ENCODE measurements at regions of chr2 and their contacts with region 1.

Region 1: DNA sequence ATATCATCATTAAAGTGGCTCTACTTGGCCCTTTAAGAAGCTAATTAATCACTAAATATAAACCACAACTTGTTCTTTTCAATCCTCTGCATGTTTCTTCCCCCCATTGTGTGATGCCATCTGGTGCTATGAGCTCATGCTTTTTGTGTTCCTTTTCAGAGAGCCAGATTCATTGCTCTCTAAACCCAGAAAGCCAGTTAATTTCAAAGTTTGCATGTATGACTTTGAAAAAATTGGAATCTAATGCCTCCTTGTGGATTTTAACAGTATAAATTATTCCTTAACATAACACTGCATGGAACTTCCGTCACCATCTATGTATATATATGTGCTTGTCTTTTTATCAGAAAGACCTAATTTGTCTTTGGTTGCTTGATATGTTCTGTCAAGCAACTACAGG is 31.1 kb downstream of the TMEM178A start:
- DNase-seq: no peak

Region 2: GRCh38 chr2:39379643-39380524 is 317.0 kb before region 1 on chr2:
- intact Hi-C with region 1: loop called (anchors 10 kb)
- DNase-seq: no peak

Region 3: GRCh38 chr2:39513641-39514094 is 183.2 kb before region 1 on chr2:
- intact Hi-C with region 1: loop called (anchors 2 kb)
- DNase-seq: peak in 4 of 10 donors; percentile 29 to 57 (median 44)

Region 4: GRCh38 chr2:39541011-39541930 is 155.6 kb before region 1 on chr2:
- intact Hi-C with region 1: no loop called
- DNase-seq: no peak

Region 5: DNA sequence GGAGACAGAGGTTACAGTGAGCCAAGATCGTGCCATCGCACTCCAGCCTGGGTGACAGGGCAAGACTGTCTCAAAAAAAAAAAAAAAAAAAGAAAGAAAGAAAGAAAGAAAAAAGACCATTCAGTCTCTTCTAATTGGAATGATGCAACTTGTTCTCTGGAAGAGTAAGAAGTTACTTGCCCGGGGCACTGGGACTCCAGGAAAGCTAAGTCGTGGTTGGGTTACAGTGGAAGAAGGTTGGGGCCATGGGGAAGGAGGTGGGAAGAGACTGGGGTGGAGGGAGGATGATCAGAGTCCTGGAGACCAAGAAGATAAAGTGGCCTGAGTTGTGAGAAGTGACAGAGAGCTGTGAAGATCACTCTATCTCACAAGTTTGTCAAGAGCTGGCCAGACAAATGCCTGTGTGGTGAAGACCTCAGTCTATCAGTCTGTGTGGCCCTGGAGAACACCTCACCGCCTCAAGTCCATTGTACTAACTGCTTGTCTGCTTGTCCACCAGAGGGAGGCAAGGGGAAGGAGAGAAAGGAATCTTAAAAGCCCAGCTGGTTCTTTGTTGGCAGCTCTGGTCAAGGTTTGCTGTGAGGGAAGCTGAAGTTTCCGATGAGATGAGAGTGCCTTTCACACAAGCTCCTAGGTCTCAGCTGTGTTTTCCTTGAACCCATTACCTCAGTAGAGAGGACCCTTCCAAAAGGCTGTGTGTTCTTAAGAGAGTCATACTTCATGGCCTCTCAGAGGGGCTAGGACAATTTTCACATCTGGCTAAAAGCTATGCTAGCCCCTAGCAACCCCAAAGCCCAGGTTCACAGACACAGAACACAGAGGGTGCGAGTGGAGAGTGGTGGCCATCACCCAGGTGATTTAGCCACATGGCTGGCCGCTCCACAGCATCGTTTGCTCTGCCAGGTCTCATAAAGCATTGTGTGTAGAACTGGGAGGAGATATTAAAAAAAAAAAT is 103.1 kb before region 1 on chr2:
- intact Hi-C with region 1: loop called (anchors 2 kb)
- DNase-seq: peak in 2 of 10 donors; percentile 25 to 44

Measured in posterior cingulate gyrus (tissue), 11 donors.